ENCODE measurements at regions of chr4 and their contacts with region 1.

Region 1: GRCh38 chr4:108060164-108060563 is 70.5 kb downstream of the HADH start:
- DNase-seq: no peak
- ATAC-seq: no peak
- H3K4me3 ChIP-seq: no peak overlapping the region
- H3K4me3 Mint-ChIP-seq: no peak overlapping the region
- H3K27ac ChIP-seq: no peak overlapping the region
- H3K27ac Mint-ChIP-seq: no peak overlapping the region
- H3K4me1 ChIP-seq: no peaks in the 10 kb centered on the region
- H3K4me1 Mint-ChIP-seq: no peaks in the 10 kb centered on the region
- H3K27me3 ChIP-seq: no peaks in the 10 kb centered on the region
- H3K27me3 Mint-ChIP-seq: peaks cover 3% of the 10 kb centered on the region
- CTCF ChIP-seq: no peak

Region 2: GRCh38 chr4:107893171-107894137 is 166.7 kb before region 1 on chr4:
- CTCF ChIA-PET with region 1: no interaction called
- POLR2A ChIA-PET with region 1: no interaction called
- intact Hi-C with region 1: loop called (anchors 5 kb)
- DNase-seq: no peak
- ATAC-seq: no peak
- H3K4me3 ChIP-seq: no peak overlapping the region
- H3K4me3 Mint-ChIP-seq: no peak overlapping the region
- H3K27ac ChIP-seq: no peak overlapping the region
- H3K27ac Mint-ChIP-seq: no peak overlapping the region
- H3K4me1 ChIP-seq: no peaks in the 10 kb centered on the region
- H3K4me1 Mint-ChIP-seq: no peaks in the 10 kb centered on the region
- H3K27me3 ChIP-seq: no peaks in the 10 kb centered on the region
- H3K27me3 Mint-ChIP-seq: peaks cover 6% of the 10 kb centered on the region
- CTCF ChIP-seq: no peak

Region 3: DNA sequence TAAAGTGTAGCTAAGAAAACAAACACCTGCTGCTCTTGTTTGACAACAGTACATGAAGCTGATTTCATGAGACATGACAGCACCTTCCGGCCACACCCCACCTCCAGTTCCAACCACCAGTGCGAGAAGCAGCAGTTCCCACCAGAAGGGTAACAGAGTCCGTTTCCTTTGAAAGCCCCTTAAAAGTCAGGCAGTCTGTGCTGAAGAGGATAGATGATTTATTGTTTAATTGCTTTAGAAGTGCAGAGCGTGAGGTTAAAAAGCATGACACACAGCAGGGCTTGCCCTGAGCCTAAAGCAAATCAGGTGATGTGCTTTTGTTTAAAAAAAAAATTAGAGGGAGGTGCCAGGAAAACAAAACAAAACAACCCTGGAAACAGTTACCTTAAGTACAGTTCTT is 12.1 kb after region 1 on chr4:
- CTCF ChIA-PET with region 1: no interaction called
- POLR2A ChIA-PET with region 1: no interaction called
- intact Hi-C with region 1: no loop called
- DNase-seq: no peak
- ATAC-seq: no peak
- H3K4me3 ChIP-seq: no peak overlapping the region
- H3K4me3 Mint-ChIP-seq: peak overlapping the region; percentile 5
- H3K27ac ChIP-seq: no peak overlapping the region
- H3K27ac Mint-ChIP-seq: no peak overlapping the region
- H3K4me1 ChIP-seq: peaks cover 0 to 4% of the 10 kb centered on the region in 2 donors
- H3K4me1 Mint-ChIP-seq: peaks cover 6% of the 10 kb centered on the region
- H3K27me3 ChIP-seq: no peaks in the 10 kb centered on the region
- H3K27me3 Mint-ChIP-seq: peaks cover 9% of the 10 kb centered on the region
- CTCF ChIP-seq: no peak

Region 4: DNA sequence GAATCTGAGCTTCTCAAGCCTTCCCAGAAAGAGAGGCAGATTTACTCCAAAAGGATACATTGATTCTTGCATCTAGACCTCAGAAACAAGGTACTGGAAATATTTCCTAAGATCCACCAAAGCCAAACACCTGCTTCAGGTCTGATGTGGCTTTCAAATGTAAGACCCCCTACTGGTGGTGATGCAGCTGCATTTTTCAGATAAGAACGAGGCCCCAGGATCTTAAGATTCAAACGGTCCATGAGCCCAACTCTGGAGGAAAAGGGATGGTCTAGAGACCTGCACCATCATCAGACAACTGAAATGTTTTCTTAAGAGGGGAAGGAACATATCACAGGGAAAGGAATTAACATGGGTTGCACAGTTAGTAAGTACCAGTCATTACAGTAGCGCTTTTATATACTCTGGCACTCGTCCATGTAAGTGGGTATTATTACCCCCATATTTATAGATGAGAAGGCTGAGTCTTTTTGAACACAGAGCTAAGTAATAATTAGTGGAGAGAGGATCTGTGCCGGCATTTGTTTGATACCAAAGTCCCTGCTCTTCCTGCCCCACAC is 34.8 kb after region 1 on chr4:
- CTCF ChIA-PET with region 1: no interaction called
- POLR2A ChIA-PET with region 1: no interaction called
- intact Hi-C with region 1: no loop called
- DNase-seq: no peak
- ATAC-seq: no peak
- H3K4me3 ChIP-seq: no peak overlapping the region
- H3K4me3 Mint-ChIP-seq: no peak overlapping the region
- H3K27ac ChIP-seq: no peak overlapping the region
- H3K27ac Mint-ChIP-seq: no peak overlapping the region
- H3K4me1 ChIP-seq: no peaks in the 10 kb centered on the region
- H3K4me1 Mint-ChIP-seq: no peaks in the 10 kb centered on the region
- H3K27me3 ChIP-seq: no peaks in the 10 kb centered on the region
- H3K27me3 Mint-ChIP-seq: peaks cover 7% of the 10 kb centered on the region
- CTCF ChIP-seq: no peak